Heart left ventricle (tissue), 16 donors: ENCODE measurements at regions of chr1 and their contacts with region 1.

Region 1: GRCh38 chr1:169999331-169999741 is 75.2 kb downstream of the KIFAP3 start:
- DNase-seq: peak in 2 of 5 donors; percentile 6 to 35
- ATAC-seq: peak in 1 of 4 donors; percentile 22
- H3K4me3 ChIP-seq: no peak overlapping the region
- H3K27ac ChIP-seq: peak overlapping the region in 6 of 12 donors; percentile 12 to 50 (median 32)
- H3K4me1 ChIP-seq: peaks cover 0 to 16% (median 0%) of the 10 kb centered on the region in 12 donors
- H3K27me3 ChIP-seq: no peaks in the 10 kb centered on the region
- CTCF ChIP-seq: no peak
- POLR2A ChIP-seq: no peak

Region 2: DNA sequence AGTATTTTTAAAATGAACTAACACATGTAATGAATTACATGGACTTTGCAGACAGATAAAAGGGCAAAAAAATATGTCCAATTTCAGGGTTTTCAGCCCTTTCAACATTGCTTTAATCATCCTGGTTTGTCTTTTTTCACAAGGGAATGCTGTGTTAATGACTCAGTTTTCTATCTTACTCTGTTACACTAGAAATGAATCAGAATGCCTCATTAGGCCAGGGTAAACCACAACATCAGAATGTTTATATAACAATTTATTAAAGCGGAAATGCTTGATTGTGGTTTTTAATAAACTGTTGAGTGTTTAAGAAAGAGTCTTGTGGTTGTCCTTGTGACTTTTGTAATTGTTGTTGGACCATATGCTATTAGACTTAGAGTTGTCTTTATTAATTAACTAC is 546.1 kb after region 1 on chr1:
- intact Hi-C with region 1: loop called in 1 of 10 experiments (anchors 10 kb)
- DNase-seq: no peak
- ATAC-seq: peak in 1 of 4 donors; percentile 34
- H3K4me3 ChIP-seq: no peak overlapping the region
- H3K27ac ChIP-seq: no peak overlapping the region
- H3K4me1 ChIP-seq: no peaks in the 10 kb centered on the region
- H3K27me3 ChIP-seq: no peaks in the 10 kb centered on the region
- CTCF ChIP-seq: no peak
- POLR2A ChIP-seq: no peak

Region 3: DNA sequence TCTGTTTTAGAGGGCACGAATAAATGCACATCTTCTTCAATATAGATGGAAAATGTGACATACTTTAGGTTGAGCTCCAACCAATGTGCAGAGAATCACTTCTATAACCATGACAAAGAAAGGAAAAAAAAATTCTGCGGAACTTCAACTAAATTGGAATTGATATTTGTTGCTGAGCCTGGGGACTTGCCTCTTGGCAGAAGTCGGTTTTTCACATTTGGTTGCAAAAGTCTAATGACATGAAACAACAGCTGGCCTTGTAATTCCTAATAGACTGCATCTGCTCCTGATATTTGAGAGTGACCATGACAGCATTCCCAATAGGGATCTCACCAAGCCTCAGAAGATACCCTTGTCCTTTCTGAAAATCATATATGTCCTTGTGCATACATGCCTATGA is 777.4 kb after region 1 on chr1:
- intact Hi-C with region 1: loop called in 1 of 10 experiments (anchors 10 kb)
- DNase-seq: peak in 2 of 5 donors; percentile 9 to 21
- ATAC-seq: peak in 2 of 4 donors; percentile 36 to 42
- H3K4me3 ChIP-seq: no peak overlapping the region
- H3K27ac ChIP-seq: peak overlapping the region in 4 of 12 donors; percentile 7 to 51 (median 39)
- H3K4me1 ChIP-seq: peaks cover 0 to 5% (median 0%) of the 10 kb centered on the region in 12 donors
- H3K27me3 ChIP-seq: no peaks in the 10 kb centered on the region
- CTCF ChIP-seq: no peak
- POLR2A ChIP-seq: no peak